ENCODE measurements at regions of chr5 and their contacts with region 1.

Region 1: DNA sequence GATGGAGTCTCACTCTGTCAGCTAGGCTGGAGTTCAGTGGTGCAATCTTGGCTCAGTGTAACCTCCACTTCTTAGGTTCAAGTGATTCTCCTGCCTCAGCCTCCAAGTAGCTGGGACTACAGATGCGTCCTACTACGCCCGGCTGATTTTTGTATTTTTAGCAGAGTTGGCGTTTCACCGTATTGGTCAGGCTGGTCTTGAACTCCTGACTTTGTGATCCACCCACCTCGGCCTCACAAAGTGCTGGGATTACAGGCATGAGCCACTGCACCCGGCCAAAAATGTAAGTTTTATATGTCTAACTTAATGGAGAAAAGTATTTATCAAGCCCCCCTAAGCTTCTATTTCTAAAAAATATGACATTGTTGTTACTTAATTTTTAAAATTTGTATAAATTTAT is 98.2 kb upstream of the RIOK2 start:
- DNase-seq: no peak
- ATAC-seq: no peak
- H3K4me3 ChIP-seq: no peak overlapping the region
- H3K4me3 Mint-ChIP-seq: no peak overlapping the region
- H3K27ac ChIP-seq: no peak overlapping the region
- H3K27ac Mint-ChIP-seq: no peak overlapping the region
- H3K4me1 ChIP-seq: no peaks in the 10 kb centered on the region
- H3K4me1 Mint-ChIP-seq: no peaks in the 10 kb centered on the region
- H3K27me3 ChIP-seq: no peaks in the 10 kb centered on the region
- H3K27me3 Mint-ChIP-seq: peaks cover 0 to 4% of the 10 kb centered on the region in 2 donors

Region 2: GRCh38 chr5:96729156-96729555 is 552.1 kb before region 1 on chr5:
- CTCF ChIA-PET with region 1: no interaction called
- POLR2A ChIA-PET with region 1: no interaction called
- DNase-seq: peak in 1 of 35 experiments; percentile 16
- ATAC-seq: no peak
- H3K4me3 ChIP-seq: no peak overlapping the region
- H3K4me3 Mint-ChIP-seq: no peak overlapping the region
- H3K27ac ChIP-seq: no peak overlapping the region
- H3K27ac Mint-ChIP-seq: no peak overlapping the region
- H3K4me1 ChIP-seq: peaks cover 4 to 6% of the 10 kb centered on the region in 2 experiments
- H3K4me1 Mint-ChIP-seq: peaks cover 13 to 33% (median 15%) of the 10 kb centered on the region in 3 donors
- H3K27me3 ChIP-seq: no peaks in the 10 kb centered on the region
- H3K27me3 Mint-ChIP-seq: no peaks in the 10 kb centered on the region

Region 3: GRCh38 chr5:97149709-97150108 is 131.5 kb before region 1 on chr5:
- CTCF ChIA-PET with region 1: no interaction called
- POLR2A ChIA-PET with region 1: no interaction called
- DNase-seq: no peak
- ATAC-seq: no peak
- H3K4me3 ChIP-seq: no peak overlapping the region
- H3K4me3 Mint-ChIP-seq: no peak overlapping the region
- H3K27ac ChIP-seq: no peak overlapping the region
- H3K27ac Mint-ChIP-seq: no peak overlapping the region
- H3K4me1 ChIP-seq: no peaks in the 10 kb centered on the region
- H3K4me1 Mint-ChIP-seq: no peaks in the 10 kb centered on the region
- H3K27me3 ChIP-seq: no peaks in the 10 kb centered on the region
- H3K27me3 Mint-ChIP-seq: no peaks in the 10 kb centered on the region

Region 4: GRCh38 chr5:97266576-97266975 is 14.7 kb before region 1 on chr5:
- CTCF ChIA-PET with region 1: interaction called in 1 of 2 experiments, 10 read pairs
- POLR2A ChIA-PET with region 1: no interaction called
- DNase-seq: no peak
- ATAC-seq: no peak
- H3K4me3 ChIP-seq: no peak overlapping the region
- H3K4me3 Mint-ChIP-seq: no peak overlapping the region
- H3K27ac ChIP-seq: no peak overlapping the region
- H3K27ac Mint-ChIP-seq: no peak overlapping the region
- H3K4me1 ChIP-seq: no peaks in the 10 kb centered on the region
- H3K4me1 Mint-ChIP-seq: no peaks in the 10 kb centered on the region
- H3K27me3 ChIP-seq: no peaks in the 10 kb centered on the region
- H3K27me3 Mint-ChIP-seq: peaks cover 3 to 6% of the 10 kb centered on the region in 2 donors

Measured in T-cell (primary cell).